ENCODE measurements at regions of chr16 and their contacts with region 1.

Region 1: DNA sequence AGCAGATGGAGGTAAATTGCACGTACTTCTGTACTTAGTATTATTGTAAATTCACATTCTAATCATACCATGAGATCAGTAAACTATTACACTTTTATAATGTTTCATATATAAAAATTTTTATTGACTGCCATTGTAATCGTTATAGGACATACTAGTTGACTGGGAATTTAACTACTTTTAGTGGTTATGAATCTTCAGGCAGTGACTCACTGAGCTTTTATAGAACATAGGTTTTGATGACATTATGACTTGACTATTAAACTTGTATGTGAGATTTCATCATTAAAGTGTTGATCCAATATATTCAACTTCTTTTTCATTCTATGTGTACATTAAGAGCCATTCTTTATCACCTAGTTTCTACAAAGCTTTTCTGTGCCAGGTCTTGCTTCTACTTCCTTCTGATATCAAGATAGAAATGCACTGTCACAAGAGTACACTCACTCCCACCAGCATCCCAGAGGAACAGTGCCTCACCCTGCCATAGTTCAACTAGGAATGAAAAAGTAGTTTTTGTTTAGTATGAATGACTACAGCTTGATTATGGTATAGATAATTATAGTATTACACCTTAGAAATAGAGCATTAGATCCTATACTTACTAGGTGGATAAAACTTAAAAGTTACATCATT is 142.4 kb upstream of the RBL2 start:
- DNase-seq: no peak
- ATAC-seq: no peak
- H3K4me3 ChIP-seq: no peak overlapping the region
- H3K27ac ChIP-seq: no peak overlapping the region
- H3K4me1 ChIP-seq: no peaks in the 10 kb centered on the region
- H3K27me3 ChIP-seq: no peaks in the 10 kb centered on the region
- CTCF ChIP-seq: no peak
- POLR2A ChIP-seq: no peak

Region 2: DNA sequence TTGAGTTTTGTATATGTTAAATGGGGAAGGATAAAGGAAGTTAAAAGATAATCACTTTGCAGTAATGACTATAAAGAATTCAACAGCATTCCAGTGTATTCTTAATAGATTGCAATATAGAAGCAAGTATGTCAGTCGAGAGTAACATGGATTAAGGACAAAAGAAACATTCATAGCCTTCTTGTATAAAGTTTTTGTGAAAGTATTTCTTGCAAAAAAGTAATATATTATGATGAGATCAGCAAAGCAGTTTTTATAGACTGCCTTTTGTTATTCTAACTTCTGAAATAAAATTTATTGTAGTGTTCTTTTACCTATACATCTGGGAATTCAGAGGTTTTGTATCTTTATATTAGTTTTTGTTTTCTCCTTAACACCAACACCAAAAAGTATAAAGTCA is 42.5 kb before region 1 on chr16:
- intact Hi-C with region 1: loop called in 1 of 10 experiments (anchors 10 kb)
- DNase-seq: no peak
- ATAC-seq: no peak
- H3K4me3 ChIP-seq: no peak overlapping the region
- H3K27ac ChIP-seq: no peak overlapping the region
- H3K4me1 ChIP-seq: no peaks in the 10 kb centered on the region
- H3K27me3 ChIP-seq: no peaks in the 10 kb centered on the region
- CTCF ChIP-seq: no peak
- POLR2A ChIP-seq: no peak

Measured in heart left ventricle (tissue), 16 donors.